ENCODE measurements at regions of chr6 and their contacts with region 1.

Region 1: DNA sequence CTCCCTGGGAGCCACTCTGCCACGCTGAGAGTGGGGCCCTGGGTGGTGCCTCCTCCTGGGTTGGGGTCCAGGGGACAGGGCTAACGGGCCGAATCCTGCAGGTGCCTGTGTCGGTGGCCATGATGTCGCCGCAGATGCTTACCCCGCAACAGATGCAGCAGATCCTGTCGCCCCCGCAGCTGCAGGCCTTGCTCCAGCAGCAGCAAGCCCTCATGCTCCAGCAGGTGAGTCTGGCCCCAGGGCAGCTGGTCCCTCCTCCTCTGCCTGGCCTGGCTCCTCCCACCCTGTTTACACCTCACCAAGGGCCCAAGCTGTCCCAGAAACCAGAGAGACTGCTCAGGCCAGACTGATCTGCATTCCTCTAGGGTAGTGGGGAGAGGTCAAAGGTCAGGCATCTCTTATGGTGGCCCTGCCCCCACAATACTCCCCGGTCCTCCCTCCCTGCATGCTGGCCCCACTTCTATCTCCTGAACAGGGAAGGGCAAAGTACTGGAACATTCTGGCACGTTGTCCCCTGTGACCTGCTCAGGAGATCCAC is 38.6 kb downstream of the FOXP4 start:
- DNase-seq: peak; percentile 88 to 91
- H3K4me3 ChIP-seq: no peak overlapping the region
- H3K4me3 Mint-ChIP-seq: peak overlapping the region; percentile 9
- H3K27ac Mint-ChIP-seq: peak overlapping the region; percentile 11
- H3K4me1 ChIP-seq: peaks cover 54% of the 10 kb centered on the region
- H3K4me1 Mint-ChIP-seq: peaks cover 28% of the 10 kb centered on the region
- H3K27me3 ChIP-seq: no peaks in the 10 kb centered on the region
- H3K27me3 Mint-ChIP-seq: no peaks in the 10 kb centered on the region
- CTCF ChIP-seq: no peak

Region 2: DNA sequence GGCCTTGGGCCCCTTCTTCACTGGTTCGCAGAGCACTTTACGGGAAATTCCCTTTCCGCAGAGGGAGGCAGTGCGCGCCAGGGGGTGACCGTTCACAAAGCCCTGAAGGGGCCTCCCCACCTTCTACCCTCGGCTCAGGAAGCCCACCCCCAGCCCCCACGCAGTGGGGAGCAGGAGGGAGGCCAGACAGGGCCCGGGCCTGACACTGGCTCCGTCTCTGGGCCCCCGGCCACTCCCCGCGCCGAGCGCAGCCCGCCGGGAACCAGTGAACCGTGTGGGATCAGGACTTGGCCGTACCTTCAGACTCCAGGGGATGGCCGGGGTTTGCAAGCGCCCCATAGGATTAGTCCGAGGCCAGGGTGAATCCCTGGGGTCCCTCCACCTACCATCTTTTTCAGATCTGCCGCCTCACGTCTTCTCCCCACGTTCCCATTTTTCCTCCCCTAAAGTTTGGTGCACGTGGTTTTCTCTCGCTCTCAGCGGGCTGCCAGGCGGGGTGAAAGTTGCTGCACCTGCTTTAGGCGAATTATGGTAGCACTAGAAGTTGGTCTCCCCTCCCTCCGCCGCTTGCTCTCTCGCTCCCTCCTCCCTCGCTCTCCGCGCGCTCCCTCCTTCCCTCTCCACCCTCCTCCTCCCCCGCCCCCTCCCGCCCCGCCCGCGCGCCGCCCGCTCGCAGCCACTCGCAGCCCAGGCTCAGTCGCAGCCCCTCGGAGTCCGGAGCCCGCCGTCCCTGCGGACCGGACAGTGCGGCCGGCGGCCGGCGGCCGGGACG is 38.8 kb before region 1 on chr6 and contains the start of gene FOXP4:
- CTCF ChIA-PET with region 1: no interaction called
- POLR2A ChIA-PET with region 1: no interaction called
- intact Hi-C with region 1: loop called (anchors 2 kb)
- DNase-seq: peak; percentile 90 to 94
- H3K4me3 ChIP-seq: peak within 1 kb of the TSS; percentile 95
- H3K4me3 Mint-ChIP-seq: peak within 1 kb of the TSS; percentile 91
- H3K27ac Mint-ChIP-seq: peak within 1 kb of the TSS; percentile 88
- H3K4me1 ChIP-seq: peaks cover 41% of the 10 kb centered on the region
- H3K4me1 Mint-ChIP-seq: peaks cover 29% of the 10 kb centered on the region
- H3K27me3 ChIP-seq: no peaks in the 10 kb centered on the region
- H3K27me3 Mint-ChIP-seq: no peaks in the 10 kb centered on the region
- CTCF ChIP-seq: no peak
- total RNA-seq, gene FOXP4: 108 and 117 TPM in 2 replicates